ENCODE measurements at regions of chr7 and their contacts with region 1.

Region 1: DNA sequence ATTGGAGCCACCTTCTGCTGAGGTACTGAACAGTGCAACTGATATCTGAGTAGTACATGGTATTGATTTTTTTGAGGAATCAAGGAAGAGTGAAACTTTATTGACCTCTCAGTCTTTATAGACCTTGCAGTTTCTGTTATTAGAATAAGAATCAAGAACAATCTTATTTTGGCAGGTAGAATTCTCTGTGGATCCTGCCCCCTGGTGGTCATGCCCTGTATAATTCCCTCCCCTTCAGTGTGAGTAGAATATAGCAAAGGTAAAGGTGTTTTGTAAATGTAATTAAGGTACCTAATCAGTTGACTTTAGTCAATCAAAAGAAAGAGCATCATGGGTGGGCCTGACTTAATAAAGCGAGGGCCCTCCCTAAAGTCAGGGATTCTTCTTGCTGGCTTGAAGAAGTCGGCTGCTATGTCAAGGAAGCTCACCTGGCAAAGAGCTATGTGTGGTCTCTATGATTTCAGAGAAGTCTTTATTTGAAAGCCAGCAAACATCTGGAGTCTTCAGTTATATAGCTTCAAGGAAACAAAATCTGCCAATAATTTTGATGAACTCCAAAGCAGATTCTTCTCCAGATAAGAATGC is 142.8 kb downstream of the LSM5 start:
- DNase-seq: peak; percentile 10
- H3K4me3 Mint-ChIP-seq: no peak overlapping the region
- H3K27ac Mint-ChIP-seq: no peak overlapping the region
- H3K4me1 Mint-ChIP-seq: no peaks in the 10 kb centered on the region
- H3K27me3 Mint-ChIP-seq: no peaks in the 10 kb centered on the region

Region 2: DNA sequence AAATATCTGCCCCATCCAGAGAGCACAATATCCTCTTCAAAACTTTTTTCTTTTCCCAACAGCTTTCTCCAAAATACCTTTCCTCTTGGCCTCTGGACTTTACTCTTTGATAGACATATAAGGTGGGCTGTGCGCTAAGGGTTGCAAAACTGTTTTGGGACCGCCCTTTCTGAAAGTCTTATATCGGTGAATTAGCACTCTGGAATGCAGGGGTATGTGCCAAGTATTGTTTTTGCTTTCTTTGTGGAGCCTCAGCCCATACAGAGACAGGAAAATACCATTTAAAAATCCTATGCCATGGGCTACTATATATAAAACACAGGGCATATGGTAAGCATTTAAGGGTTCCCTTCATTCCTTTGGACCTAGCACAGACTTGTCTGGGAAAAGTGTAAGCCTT is 622.6 kb before region 1 on chr7:
- intact Hi-C with region 1: no loop called
- DNase-seq: no peak
- H3K4me3 Mint-ChIP-seq: no peak overlapping the region
- H3K27ac Mint-ChIP-seq: no peak overlapping the region
- H3K4me1 Mint-ChIP-seq: no peaks in the 10 kb centered on the region
- H3K27me3 Mint-ChIP-seq: no peaks in the 10 kb centered on the region

Region 3: DNA sequence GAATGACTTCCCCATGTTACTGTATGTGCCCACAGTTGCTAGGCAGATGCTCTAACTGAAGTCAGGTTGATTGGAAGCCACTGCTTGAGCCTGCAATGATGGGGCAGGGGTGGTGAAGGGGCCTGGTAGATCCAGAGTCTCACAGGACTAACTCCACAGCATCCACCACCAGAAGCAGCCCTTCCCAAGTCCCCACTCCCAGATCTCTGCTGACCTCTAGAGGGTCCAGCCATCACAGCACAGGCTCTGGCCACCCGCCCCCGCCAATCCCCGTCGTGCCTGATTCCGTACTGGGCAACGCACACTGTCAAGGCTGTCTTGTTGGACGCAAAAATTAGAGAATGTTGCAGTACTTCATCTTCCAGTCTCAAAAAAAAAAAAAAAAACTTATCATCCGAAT is 140.3 kb before region 1 on chr7:
- intact Hi-C with region 1: loop called (anchors 2 kb)
- DNase-seq: no peak
- H3K4me3 Mint-ChIP-seq: no peak overlapping the region
- H3K27ac Mint-ChIP-seq: no peak overlapping the region
- H3K4me1 Mint-ChIP-seq: no peaks in the 10 kb centered on the region
- H3K27me3 Mint-ChIP-seq: no peaks in the 10 kb centered on the region

Region 4: DNA sequence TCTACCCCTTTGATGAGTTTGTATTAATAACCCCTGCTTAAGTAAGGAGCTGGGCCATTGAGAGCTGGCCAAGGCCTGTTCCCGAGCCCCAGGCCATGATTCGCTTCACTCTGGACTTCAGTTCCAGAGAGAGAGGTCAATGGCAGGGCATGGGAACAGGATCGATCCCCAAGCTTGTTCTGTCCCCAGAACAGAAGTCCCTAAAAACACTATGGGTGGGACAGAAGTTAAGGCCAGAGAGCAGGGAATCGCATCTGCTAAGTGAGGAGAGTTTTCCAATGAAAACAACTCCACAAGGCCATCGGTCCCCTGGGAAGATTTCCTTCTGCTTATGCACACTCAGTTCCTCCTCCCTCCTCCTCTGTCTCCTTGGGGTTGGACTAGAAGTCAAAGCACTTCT is 16.7 kb before region 1 on chr7:
- intact Hi-C with region 1: no loop called
- DNase-seq: no peak
- H3K4me3 Mint-ChIP-seq: no peak overlapping the region
- H3K27ac Mint-ChIP-seq: no peak overlapping the region
- H3K4me1 Mint-ChIP-seq: no peaks in the 10 kb centered on the region
- H3K27me3 Mint-ChIP-seq: no peaks in the 10 kb centered on the region

Region 5: DNA sequence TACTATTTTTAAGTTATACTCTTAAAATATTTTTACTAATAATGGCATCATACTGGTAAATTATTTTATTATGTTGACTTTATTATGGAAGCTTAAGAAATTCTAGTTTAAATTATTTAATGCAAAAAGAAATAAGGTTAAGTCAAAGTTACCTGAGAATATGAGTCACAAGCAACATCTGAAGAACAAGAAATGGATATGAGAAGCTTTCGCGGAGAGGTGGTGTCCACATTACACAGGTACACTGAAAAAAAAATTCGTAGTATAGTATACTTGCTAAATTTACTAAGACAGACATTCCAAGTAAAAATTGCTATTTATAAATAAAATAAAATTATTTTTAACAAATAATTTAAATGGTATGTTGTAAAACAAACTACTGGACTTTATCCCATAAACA is 291.8 kb after region 1 on chr7:
- intact Hi-C with region 1: no loop called
- DNase-seq: no peak
- H3K4me3 Mint-ChIP-seq: no peak overlapping the region
- H3K27ac Mint-ChIP-seq: no peak overlapping the region
- H3K4me1 Mint-ChIP-seq: peaks cover 6% of the 10 kb centered on the region
- H3K27me3 Mint-ChIP-seq: peaks cover 13% of the 10 kb centered on the region

Measured in activated T-helper 2 cell treated with anti-CD3 and anti-CD28 coated beads, Interferon-gamma antibody, Interleukin-2, Interleukin-4, amounts not matched to agents 10 μg/mL and 5 μg/mL and 100 μg/mL, durations not matched to agents 14 hours and 24 hours and 36 hours (primary cell).